Prostate gland (tissue), 2 donors: ENCODE measurements at regions of chr7 and their contacts with region 1.

Region 1: GRCh38 chr7:39583539-39583938 is 17.3 kb downstream of the YAE1 start:
- DNase-seq: no peak
- H3K4me3 ChIP-seq: no peak overlapping the region
- H3K27ac ChIP-seq: no peak overlapping the region
- H3K4me1 ChIP-seq: no peaks in the 10 kb centered on the region
- H3K27me3 ChIP-seq: no peaks in the 10 kb centered on the region
- CTCF ChIP-seq: no peak
- POLR2A ChIP-seq: no peak

Region 2: GRCh38 chr7:39016604-39017003 is 566.9 kb before region 1 on chr7:
- intact Hi-C with region 1: no loop called
- DNase-seq: peak; percentile 31
- H3K4me3 ChIP-seq: no peak overlapping the region
- H3K27ac ChIP-seq: no peak overlapping the region
- H3K4me1 ChIP-seq: no peaks in the 10 kb centered on the region
- H3K27me3 ChIP-seq: no peaks in the 10 kb centered on the region
- CTCF ChIP-seq: no peak
- POLR2A ChIP-seq: no peak

Region 3: GRCh38 chr7:39623018-39623731 is 39.6 kb after region 1 on chr7 and contains the start of gene RALA:
- intact Hi-C with region 1: no loop called
- DNase-seq: peak; percentile 91
- H3K4me3 ChIP-seq: peak within 1 kb of the TSS; percentile 92 to 95
- H3K27ac ChIP-seq: peak within 1 kb of the TSS; percentile 80 to 92
- H3K4me1 ChIP-seq: no peaks in the 10 kb centered on the region
- H3K27me3 ChIP-seq: no peaks in the 10 kb centered on the region
- CTCF ChIP-seq: peak in 1 of 4 experiments; percentile 15
- POLR2A ChIP-seq: peak; percentile 82
- total RNA-seq, gene RALA: 11.9 to 14.7 TPM

Region 4: GRCh38 chr7:39745320-39745719 is 161.8 kb after region 1 on chr7:
- intact Hi-C with region 1: loop called (anchors 1 kb)
- DNase-seq: no peak
- H3K4me3 ChIP-seq: no peak overlapping the region
- H3K27ac ChIP-seq: no peak overlapping the region
- H3K4me1 ChIP-seq: no peaks in the 10 kb centered on the region
- H3K27me3 ChIP-seq: no peaks in the 10 kb centered on the region
- CTCF ChIP-seq: no peak
- POLR2A ChIP-seq: no peak